ENCODE measurements at regions of chr12 and their contacts with region 1.

Region 1: GRCh38 chr12:120825337-120825736 is 78.8 kb downstream of the SPPL3 start:
- DNase-seq: no peak
- ATAC-seq: no peak
- H3K4me3 ChIP-seq: no peak overlapping the region
- H3K27ac ChIP-seq: no peak overlapping the region
- H3K4me1 ChIP-seq: no peaks in the 10 kb centered on the region
- H3K27me3 ChIP-seq: no peaks in the 10 kb centered on the region
- CTCF ChIP-seq: no peak
- POLR2A ChIP-seq: no peak
- RAD21 ChIP-seq: no peak

Region 2: DNA sequence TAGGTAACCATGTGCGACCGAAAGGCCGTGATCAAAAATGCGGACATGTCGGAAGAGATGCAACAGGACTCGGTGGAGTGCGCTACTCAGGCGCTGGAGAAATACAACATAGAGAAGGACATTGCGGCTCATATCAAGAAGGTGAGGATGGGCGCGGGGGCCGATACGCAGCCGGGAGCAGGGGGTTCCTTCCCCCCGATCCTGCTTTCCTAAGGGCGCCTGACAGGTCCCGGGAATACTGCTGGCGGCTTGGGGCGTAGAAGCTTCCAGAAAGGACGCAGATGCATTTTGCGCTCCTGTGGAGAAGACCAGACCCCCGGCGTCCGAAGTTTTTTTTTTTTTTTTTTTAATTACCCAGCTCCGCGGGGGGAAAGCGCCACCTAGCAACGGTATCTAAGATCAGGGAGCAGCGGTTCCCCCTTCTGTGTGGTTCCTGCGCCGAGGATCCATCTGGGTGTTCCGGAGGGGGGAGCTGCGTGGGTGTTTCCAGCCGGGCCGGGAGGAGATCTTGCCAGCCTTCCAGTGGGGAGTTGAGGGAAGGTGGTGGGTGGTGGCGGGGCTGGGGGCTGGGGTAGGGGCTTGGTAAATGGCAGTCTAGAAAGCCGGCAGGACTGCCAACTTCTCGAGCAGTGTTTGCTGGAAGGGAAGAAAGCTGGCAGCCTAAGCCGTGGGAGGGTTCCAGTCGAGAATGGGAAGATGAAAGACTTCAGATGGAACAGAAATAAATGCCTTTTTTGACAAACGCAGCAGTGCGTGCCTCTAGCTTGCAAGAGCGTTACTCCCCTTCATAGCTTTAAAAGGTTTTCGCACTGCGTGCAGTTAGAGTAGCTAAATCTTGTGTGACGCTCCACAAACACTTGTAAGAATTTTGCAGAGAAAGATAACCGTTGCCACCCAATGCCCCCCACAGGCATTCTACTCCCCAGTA is 328.7 kb before region 1 on chr12:
- CTCF ChIA-PET with region 1: no interaction called
- POLR2A ChIA-PET with region 1: no interaction called
- dilution Hi-C with region 1: no loop called
- in situ Hi-C with region 1: no loop called
- intact Hi-C with region 1: no loop called
- DNase-seq: peak; percentile 56
- ATAC-seq: peak; percentile 33
- H3K4me3 ChIP-seq: peak overlapping the region; percentile 76
- H3K27ac ChIP-seq: peak overlapping the region; percentile 78
- H3K4me1 ChIP-seq: peaks cover 1% of the 10 kb centered on the region
- H3K27me3 ChIP-seq: no peaks in the 10 kb centered on the region
- CTCF ChIP-seq: no peak
- POLR2A ChIP-seq: no peak
- RAD21 ChIP-seq: peak; percentile 8; the same call in 1 of the 2 replicates

Region 3: DNA sequence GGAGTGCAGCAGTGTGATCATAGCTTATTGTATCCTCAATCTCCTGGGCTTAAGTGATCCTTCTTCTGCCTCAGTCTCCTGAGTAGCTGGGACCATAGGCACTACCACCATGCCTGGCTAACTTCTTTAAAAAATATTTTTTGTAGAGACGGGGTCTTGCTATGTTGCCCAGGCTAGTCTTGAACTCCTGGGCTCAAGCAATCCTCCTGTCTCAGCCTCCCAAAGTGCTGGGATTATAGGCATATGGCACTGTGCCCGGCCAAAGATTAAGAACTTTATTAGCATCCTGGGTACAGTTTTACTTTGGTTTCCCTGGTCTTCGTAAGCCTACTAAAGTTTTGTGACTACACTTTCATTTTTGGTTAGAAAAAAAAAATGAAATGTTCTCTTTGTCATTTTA is 15.3 kb before region 1 on chr12:
- CTCF ChIA-PET with region 1: no interaction called
- POLR2A ChIA-PET with region 1: no interaction called
- dilution Hi-C with region 1: no loop called
- in situ Hi-C with region 1: no loop called
- intact Hi-C with region 1: loop called (anchors 2 kb)
- DNase-seq: no peak
- ATAC-seq: no peak
- H3K4me3 ChIP-seq: no peak overlapping the region
- H3K27ac ChIP-seq: no peak overlapping the region
- H3K4me1 ChIP-seq: no peaks in the 10 kb centered on the region
- H3K27me3 ChIP-seq: no peaks in the 10 kb centered on the region
- CTCF ChIP-seq: no peak
- POLR2A ChIP-seq: no peak
- RAD21 ChIP-seq: no peak

Measured in IMR-90 (cell line).